K562 (cell line): ENCODE measurements at regions of chr15 and their contacts with region 1.

Region 1: DNA sequence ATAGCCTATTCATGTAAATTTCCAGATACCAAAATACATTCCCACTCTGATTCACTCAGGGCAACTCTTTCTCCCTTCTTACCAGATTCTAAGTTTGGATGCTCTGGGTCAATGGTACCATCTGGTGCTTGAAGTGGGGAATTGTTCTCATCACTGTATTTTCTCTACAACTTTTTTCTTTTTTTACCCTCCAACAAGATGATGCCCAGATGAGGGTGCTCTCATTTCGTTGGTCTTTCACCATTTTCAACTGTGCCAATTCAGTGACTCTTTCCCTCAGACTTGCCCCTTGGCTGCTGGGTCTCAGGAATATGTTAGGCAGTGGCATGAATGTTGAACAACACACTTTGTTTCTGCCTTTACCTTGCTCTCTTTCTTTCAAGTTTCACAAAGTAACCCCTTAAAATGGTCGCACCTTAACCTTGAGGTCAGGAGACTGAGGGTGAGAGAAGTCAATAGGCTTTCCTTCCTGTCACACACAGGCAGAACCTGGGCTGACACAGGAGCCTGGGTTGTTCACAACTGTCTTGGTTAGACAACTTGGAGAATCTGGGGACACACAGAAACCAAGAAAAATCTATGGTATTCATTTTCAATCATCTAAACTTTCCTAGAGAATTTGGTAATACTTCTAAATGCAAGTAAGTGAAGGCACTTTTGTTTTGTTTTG is 330.7 kb upstream of the SLCO3A1 start:
- DNase-seq: peak in 1 of 4 experiments; percentile 15
- ATAC-seq: no peak
- H3K4me3 ChIP-seq: no peak overlapping the region
- H3K27ac ChIP-seq: no peak overlapping the region
- H3K4me1 ChIP-seq: no peaks in the 10 kb centered on the region
- H3K27me3 ChIP-seq: peaks cover 0 to 4% of the 10 kb centered on the region in 2 experiments; a peak in 1 of 5 replicates
- CTCF ChIP-seq: peak; percentile 28 to 80 (median 45); a peak in 4 of 6 replicates
- EP300 ChIP-seq: no peak
- POLR2A ChIP-seq: no peak
- RAD21 ChIP-seq: peak; percentile 82 to 84

Region 2: DNA sequence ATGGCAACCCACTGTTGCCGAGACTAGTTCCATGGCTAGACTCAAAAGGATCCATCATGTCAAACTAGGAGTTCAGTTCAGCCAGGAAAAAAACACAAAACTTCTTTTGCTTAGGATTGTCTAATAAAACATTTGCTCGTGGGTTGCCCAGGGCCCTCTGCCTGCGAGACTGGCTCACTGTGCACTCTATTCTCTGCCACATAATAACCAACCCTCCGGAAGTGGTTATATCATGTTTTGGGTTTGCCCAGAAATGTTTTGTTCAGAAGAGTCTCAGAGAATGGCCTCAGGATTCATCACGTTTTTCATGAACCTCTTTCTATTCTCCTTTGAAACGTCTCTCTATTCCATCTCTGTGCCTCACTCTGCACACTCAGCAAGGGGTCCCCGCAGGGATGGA is 206.7 kb before region 1 on chr15:
- CTCF ChIA-PET with region 1: no interaction called
- POLR2A ChIA-PET with region 1: no interaction called
- in situ Hi-C with region 1: loop called (anchors 5 kb)
- intact Hi-C with region 1: no loop called
- DNase-seq: no peak
- ATAC-seq: no peak
- H3K4me3 ChIP-seq: no peak overlapping the region
- H3K27ac ChIP-seq: no peak overlapping the region
- H3K4me1 ChIP-seq: no peaks in the 10 kb centered on the region; a peak in 2 of 5 replicates
- H3K27me3 ChIP-seq: peaks cover 0 to 8% of the 10 kb centered on the region in 2 experiments; a peak in 1 of 5 replicates
- CTCF ChIP-seq: no peak
- EP300 ChIP-seq: no peak
- POLR2A ChIP-seq: no peak
- RAD21 ChIP-seq: no peak